ENCODE measurements at regions of chr7 and their contacts with region 1.

Region 1: DNA sequence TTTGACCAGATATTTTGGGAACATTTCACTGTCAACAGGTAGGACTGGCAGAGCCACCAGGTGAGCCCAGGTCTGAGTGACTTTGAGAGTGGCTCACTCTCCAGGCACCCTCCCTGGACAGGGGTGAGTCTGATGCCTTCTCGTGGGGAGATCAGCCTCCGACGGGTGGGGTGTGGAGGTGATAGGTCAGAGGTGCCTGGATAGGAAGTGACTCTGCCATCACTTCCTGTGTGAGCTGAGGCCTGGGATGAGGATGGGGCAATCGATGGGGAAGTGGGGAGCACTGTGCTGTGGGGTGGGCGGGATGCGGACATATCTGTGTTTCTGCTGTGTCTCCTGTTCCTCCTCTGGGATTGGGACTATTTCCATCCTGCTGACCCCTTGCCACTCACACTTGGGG is 34.6 kb downstream of the IFT22 start:
- DNase-seq: peak in 1 of 5 donors; percentile 26
- ATAC-seq: no peak
- H3K4me3 ChIP-seq: no peak overlapping the region
- H3K27ac ChIP-seq: no peak overlapping the region
- H3K4me1 ChIP-seq: peaks cover 0 to 6% (median 0%) of the 10 kb centered on the region in 12 donors
- H3K27me3 ChIP-seq: peaks cover 4 to 28% (median 9%) of the 10 kb centered on the region in 9 donors
- CTCF ChIP-seq: no peak
- POLR2A ChIP-seq: no peak

Region 2: DNA sequence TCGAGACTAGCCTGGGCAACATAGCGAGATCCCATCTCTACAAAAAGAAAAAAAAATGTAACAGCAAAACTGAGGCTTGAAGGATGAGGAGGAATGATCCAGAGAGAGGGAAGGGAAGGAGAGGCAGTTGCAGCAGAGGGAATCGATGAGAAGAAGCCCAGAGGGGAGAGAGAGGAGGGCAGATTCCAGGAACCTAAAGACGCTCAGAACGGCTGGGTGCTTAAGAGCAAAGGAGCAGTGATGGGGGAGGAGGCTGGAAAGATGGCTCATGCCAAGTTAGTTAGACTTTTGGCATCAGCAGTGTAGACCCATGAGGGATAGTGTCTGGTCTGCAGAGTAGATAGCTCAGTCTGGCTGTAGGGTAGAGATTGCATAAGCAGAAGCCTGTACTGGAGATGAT is 277.4 kb before region 1 on chr7:
- intact Hi-C with region 1: no loop called
- DNase-seq: no peak
- ATAC-seq: no peak
- H3K4me3 ChIP-seq: no peak overlapping the region
- H3K27ac ChIP-seq: no peak overlapping the region
- H3K4me1 ChIP-seq: no peaks in the 10 kb centered on the region
- H3K27me3 ChIP-seq: peaks cover 0 to 12% (median 0%) of the 10 kb centered on the region in 9 donors
- CTCF ChIP-seq: no peak
- POLR2A ChIP-seq: no peak

Region 3: GRCh38 chr7:101108330-101108857 is 178.6 kb before region 1 on chr7:
- intact Hi-C with region 1: no loop called
- DNase-seq: peak; percentile 56 to 80 (median 69)
- ATAC-seq: peak; percentile 54 to 86 (median 72)
- H3K4me3 ChIP-seq: no peak overlapping the region
- H3K27ac ChIP-seq: peak overlapping the region in 8 of 12 donors; percentile 23 to 61 (median 26)
- H3K4me1 ChIP-seq: peaks cover 0 to 52% (median 26%) of the 10 kb centered on the region in 12 donors
- H3K27me3 ChIP-seq: no peaks in the 10 kb centered on the region
- CTCF ChIP-seq: no peak
- POLR2A ChIP-seq: no peak

Region 4: DNA sequence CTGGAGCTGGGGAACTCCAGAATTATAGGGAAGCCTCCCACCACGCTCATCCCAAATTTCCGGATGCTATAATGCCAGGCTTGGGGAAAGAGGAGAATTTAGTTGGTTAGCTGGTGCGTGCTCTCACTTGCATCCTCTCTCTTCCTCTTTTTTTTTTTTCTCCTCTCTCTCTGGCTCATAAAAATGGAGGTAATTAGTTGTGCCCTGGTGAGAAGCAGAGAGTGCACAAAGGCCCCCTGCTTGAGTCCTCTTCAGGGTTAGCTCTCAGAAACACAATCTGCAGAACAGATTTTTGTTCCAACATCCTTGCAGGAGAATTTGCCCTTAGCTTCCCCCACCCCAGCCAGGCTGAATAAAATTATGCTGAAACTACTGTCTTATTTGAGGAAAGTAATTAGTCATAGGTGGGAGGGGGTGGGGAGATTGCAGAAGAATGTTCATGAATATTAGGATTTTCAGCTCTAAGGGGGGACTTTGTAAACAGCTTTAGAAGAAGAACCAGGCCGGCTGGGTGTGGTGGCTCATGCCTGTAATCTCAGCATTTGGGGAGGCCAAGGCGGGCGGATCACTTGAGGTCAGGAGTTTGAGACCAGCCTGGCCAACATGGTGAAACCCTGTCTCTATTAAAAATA is 152.5 kb before region 1 on chr7:
- intact Hi-C with region 1: no loop called
- DNase-seq: no peak
- ATAC-seq: no peak
- H3K4me3 ChIP-seq: no peak overlapping the region
- H3K27ac ChIP-seq: no peak overlapping the region
- H3K4me1 ChIP-seq: peaks cover 0 to 21% (median 10%) of the 10 kb centered on the region in 12 donors
- H3K27me3 ChIP-seq: no peaks in the 10 kb centered on the region
- CTCF ChIP-seq: no peak
- POLR2A ChIP-seq: no peak

Region 5: GRCh38 chr7:101185258-101185839 is 101.7 kb before region 1 on chr7:
- intact Hi-C with region 1: loop called in 4 of 10 experiments (anchors 5 kb)
- DNase-seq: no peak
- ATAC-seq: no peak
- H3K4me3 ChIP-seq: no peak overlapping the region
- H3K27ac ChIP-seq: no peak overlapping the region
- H3K4me1 ChIP-seq: peaks cover 0 to under 1% (median 0%) of the 10 kb centered on the region in 12 donors
- H3K27me3 ChIP-seq: peaks cover under 1 to 52% (median 14%) of the 10 kb centered on the region in 9 donors
- CTCF ChIP-seq: no peak
- POLR2A ChIP-seq: no peak

Region 6: DNA sequence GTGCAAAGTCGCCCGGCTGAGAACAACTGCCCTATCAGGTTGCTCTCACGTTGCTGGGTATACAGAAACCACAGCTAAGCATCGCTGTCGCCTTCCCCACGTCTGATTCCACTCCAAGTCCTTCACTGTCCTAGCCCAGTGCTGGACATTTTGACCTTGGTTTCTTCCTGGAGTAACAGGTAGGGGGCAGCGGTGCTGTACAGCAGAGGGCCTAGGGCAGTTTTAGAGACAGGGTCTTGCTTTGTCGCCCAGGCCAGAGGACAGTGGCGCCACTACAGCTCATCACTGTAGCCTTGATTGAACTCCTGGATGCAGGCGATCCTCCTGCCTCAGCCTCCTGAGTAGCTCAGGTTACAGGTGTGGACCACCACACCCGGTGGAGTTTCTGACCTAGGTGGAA is 52.0 kb before region 1 on chr7:
- intact Hi-C with region 1: loop called in 1 of 10 experiments (anchors 10 kb)
- DNase-seq: no peak
- ATAC-seq: no peak
- H3K4me3 ChIP-seq: no peak overlapping the region
- H3K27ac ChIP-seq: no peak overlapping the region
- H3K4me1 ChIP-seq: peaks cover 0 to 53% (median 40%) of the 10 kb centered on the region in 12 donors
- H3K27me3 ChIP-seq: no peaks in the 10 kb centered on the region
- CTCF ChIP-seq: peak in 8 of 12 donors; percentile 6 to 38 (median 32)
- POLR2A ChIP-seq: no peak

Region 7: DNA sequence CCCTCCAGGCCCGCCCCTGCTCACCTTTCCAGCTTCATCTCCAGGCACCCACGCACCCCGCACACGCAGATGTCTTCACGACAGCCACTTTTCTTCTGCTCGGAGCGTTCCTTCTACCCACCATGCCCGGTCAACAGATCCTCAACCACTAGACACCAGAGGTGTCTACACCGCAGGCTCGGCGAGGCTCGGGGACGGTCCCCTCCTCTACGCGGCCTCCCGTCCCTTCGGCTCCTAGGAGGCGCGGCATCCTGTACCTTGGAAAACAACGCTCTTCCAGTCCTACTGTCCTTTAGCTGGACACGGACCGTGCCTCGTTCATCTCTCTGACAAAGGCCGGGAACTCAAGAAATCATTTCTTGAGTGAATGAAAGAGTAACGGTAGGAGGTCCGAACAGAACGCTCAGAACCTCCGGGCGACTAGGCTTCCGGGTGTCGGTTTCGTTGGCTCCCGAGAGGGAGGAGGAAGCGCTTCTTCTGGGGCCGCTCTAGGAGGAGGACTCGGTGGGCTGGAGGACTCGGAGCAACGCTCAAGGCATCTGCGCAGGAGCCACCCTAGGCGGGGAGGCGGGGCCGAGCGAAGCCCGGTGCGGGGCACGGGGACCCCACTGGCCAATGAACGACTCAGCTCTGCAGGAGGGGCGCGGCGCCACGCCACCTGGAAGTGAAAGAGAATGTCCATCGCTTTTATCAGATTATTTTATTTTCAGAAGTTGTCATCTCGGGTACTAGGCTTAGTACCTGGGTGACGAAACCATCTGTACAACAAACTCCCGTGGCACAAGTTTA is 35.0 kb before region 1 on chr7:
- intact Hi-C with region 1: loop called in 2 of 10 experiments (anchors 1 to 2 kb)
- DNase-seq: peak; percentile 96 to 99 (median 99)
- ATAC-seq: peak; percentile 100
- H3K4me3 ChIP-seq: peak overlapping the region; percentile 66 to 98 (median 87)
- H3K27ac ChIP-seq: peak overlapping the region in 11 of 12 donors; percentile 17 to 81 (median 67)
- H3K4me1 ChIP-seq: peaks cover 3 to 24% (median 17%) of the 10 kb centered on the region in 12 donors
- H3K27me3 ChIP-seq: no peaks in the 10 kb centered on the region
- CTCF ChIP-seq: peak in 1 of 12 donors; percentile 9
- POLR2A ChIP-seq: peak in 1 of 2 donors; percentile 47